Activated CD4-positive, alpha-beta memory T cell treated with anti-CD3 and anti-CD28 coated beads, Interleukin-2, amount 10 ng/mL, durations not matched to agents 7 days and 5 days (primary cell): ENCODE measurements at regions of chr17 and their contacts with region 1.

Region 1: GRCh38 chr17:34542700-34543336 is 36.6 kb upstream of the TMEM132E start:
- DNase-seq: peak; percentile 52
- H3K4me3 Mint-ChIP-seq: no peak overlapping the region
- H3K27ac Mint-ChIP-seq: no peak overlapping the region
- H3K4me1 Mint-ChIP-seq: no peaks in the 10 kb centered on the region
- H3K27me3 Mint-ChIP-seq: peaks cover 30% of the 10 kb centered on the region

Region 2: GRCh38 chr17:34530918-34531317 is 11.9 kb before region 1 on chr17:
- CTCF ChIA-PET with region 1: interaction called, 15 read pairs
- POLR2A ChIA-PET with region 1: no interaction called
- DNase-seq: no peak
- H3K4me3 Mint-ChIP-seq: no peak overlapping the region
- H3K27ac Mint-ChIP-seq: no peak overlapping the region
- H3K4me1 Mint-ChIP-seq: no peaks in the 10 kb centered on the region
- H3K27me3 Mint-ChIP-seq: peaks cover 29% of the 10 kb centered on the region

Region 3: GRCh38 chr17:34616148-34616547 is 73.3 kb after region 1 on chr17:
- CTCF ChIA-PET with region 1: no interaction called
- POLR2A ChIA-PET with region 1: no interaction called
- DNase-seq: no peak
- H3K4me3 Mint-ChIP-seq: no peak overlapping the region
- H3K27ac Mint-ChIP-seq: no peak overlapping the region
- H3K4me1 Mint-ChIP-seq: no peaks in the 10 kb centered on the region
- H3K27me3 Mint-ChIP-seq: peaks cover 27% of the 10 kb centered on the region

Region 4: GRCh38 chr17:34637548-34638525 is 95.0 kb after region 1 on chr17:
- CTCF ChIA-PET with region 1: interaction called, 23 read pairs
- POLR2A ChIA-PET with region 1: no interaction called
- DNase-seq: peak; percentile 80
- H3K4me3 Mint-ChIP-seq: peak overlapping the region; percentile 37
- H3K27ac Mint-ChIP-seq: no peak overlapping the region
- H3K4me1 Mint-ChIP-seq: peaks cover 7% of the 10 kb centered on the region
- H3K27me3 Mint-ChIP-seq: peaks cover 39% of the 10 kb centered on the region